ENCODE measurements at regions of chr15 and their contacts with region 1.

Region 1: GRCh38 chr15:84658080-84658787 is at the start of gene NMB:
- DNase-seq: peak; percentile 85
- ATAC-seq: peak; percentile 58
- total RNA-seq, gene NMB: 15.4 TPM

Region 2: GRCh38 chr15:83999396-84000135 is 658.7 kb before region 1 on chr15:
- intact Hi-C with region 1: loop called (anchors 5 kb)
- DNase-seq: no peak
- ATAC-seq: no peak

Measured in sciatic nerve (tissue), 2 donors.